ENCODE measurements at regions of chr11 and their contacts with region 1.

Region 1: DNA sequence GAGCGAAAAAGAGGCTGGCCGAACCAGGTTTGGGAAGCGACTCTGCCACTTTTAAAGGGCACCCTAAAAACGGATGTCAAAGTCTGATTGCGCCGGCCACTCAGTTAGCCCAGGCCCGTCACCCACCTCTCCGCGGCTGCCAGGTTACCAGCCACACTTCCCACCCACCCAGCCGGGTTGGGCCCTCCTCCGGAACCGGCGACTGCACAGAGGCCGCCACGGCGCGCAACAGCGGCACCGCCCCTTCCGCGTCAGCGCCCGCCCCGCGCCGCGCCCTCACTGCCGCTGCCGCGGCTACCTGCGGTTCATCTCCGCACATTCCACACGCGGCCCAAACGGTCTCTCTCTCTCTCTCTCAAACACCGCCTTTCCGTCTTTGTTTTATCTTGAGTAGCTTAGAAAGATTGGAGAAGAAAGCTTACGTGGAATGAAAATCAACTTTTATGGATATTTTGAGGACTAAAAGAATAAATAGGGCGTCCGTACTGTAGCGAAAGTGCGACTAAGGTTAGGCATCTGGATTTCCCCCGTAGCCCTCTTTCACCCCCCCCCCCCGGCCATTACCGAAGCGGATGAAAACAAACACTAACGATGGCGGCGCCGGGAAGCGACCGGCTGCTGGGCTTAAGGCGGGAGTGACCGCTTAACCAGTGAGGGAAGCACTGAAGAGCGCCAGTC is at the starts of genes ATG13 and HARBI1:
- DNase-seq: peak; percentile 21
- H3K4me3 ChIP-seq: peak within 1 kb of the TSS; percentile 100
- H3K27me3 ChIP-seq: no peaks in the 10 kb centered on the region
- CTCF ChIP-seq: no peak
- polyA plus RNA-seq, gene ATG13: 80.0 and 111 TPM in 2 replicates
- polyA plus RNA-seq, gene HARBI1: 3.6 and 4.5 TPM in 2 replicates

Region 2: DNA sequence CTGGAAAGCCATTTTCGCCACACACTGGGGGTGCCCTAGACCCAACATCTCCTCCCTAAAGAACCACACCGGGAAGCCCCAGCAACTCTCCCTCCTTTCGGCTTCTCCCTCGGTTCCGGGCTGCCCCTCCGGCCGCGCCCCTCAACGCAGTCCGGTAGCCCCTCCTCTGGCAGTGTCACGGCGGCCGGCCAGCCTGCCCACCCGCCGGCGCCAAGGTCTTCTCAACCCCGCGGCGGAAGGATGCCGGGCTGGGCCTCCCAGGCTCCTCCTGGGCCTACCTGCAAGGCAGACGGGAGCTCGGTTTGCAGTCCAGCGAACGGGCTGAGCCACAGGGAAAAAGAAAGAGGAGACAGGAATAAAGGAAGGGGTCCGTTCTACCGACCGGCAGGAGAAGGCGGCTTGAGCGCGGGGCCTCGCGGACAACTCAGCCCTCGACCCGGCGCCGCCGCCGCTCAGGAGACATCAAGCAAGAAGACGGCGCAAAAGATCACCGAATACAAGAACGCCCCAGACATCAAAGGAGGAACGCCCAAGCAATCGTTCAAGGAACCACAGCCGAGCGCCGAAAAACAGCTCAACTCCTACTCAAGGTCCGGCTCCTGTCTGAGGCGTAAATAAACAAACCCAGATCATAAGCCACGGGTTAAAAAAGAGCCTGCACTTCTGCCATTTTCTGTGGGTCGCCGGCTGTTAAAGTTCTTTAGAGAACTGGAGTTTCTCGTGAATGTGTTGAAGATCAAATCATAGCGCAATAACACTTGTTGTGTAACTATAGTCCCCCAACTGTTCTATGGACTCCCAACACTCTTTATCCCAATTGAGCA is 23.4 kb before region 1 on chr11 and contains the start of gene AMBRA1:
- CTCF ChIA-PET with region 1: no interaction called
- POLR2A ChIA-PET with region 1: no interaction called
- DNase-seq: peak; percentile 77
- H3K4me3 ChIP-seq: peak within 1 kb of the TSS; percentile 64
- H3K27me3 ChIP-seq: no peaks in the 10 kb centered on the region
- CTCF ChIP-seq: no peak
- polyA plus RNA-seq, gene AMBRA1: 9.9 and 12.8 TPM in 2 replicates

Region 3: DNA sequence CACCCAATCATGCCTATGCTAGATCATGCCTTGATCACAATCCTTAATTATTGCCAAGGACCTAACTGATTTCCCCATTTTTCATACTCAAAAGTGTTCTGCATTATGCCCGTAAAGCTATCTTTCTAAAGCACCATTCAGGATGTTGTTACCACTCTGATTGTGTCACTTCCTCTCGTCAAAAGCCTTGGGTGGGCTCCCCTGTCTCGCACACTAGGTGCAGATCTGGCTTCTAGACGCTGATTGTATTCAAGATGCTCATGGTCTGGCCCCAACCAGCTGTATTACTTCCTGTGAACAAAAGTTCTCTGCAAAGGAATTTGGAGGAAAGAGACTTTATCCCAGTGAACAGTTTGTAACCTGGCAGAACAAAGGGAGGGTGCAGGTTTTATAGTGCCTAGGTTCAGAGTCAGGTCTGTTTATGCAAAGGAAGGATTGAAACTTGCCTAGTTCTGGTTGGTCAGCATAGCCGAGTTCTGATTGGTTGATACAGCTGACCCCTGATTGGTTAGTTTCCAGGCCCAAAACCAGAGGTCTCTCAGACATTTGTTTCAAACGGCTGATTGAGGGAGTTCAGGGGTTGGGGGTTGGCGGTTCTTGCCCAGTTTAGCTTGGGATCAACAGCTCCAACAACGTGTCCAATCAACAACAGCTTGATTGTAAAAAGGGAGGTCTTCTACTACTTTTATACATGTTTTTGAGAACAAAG is 25.6 kb after region 1 on chr11:
- CTCF ChIA-PET with region 1: interaction called, 11 read pairs
- POLR2A ChIA-PET with region 1: no interaction called
- DNase-seq: no peak
- H3K4me3 ChIP-seq: no peak overlapping the region
- H3K27me3 ChIP-seq: no peaks in the 10 kb centered on the region
- CTCF ChIP-seq: no peak

Measured in BJ (cell line).